ENCODE measurements at regions of chrX and their contacts with region 1.

Region 1: GRCh38 chrX:83469551-83469950 is 38.5 kb upstream of the POU3F4 start:
- DNase-seq: peak; percentile 19
- H3K4me3 Mint-ChIP-seq: no peak overlapping the region
- H3K27ac Mint-ChIP-seq: no peak overlapping the region
- H3K4me1 Mint-ChIP-seq: no peaks in the 10 kb centered on the region
- H3K27me3 Mint-ChIP-seq: no peaks in the 10 kb centered on the region

Region 2: GRCh38 chrX:83630662-83631061 is 161.1 kb after region 1 on chrX:
- CTCF ChIA-PET with region 1: interaction called, 15 read pairs
- DNase-seq: no peak
- H3K4me3 Mint-ChIP-seq: no peak overlapping the region
- H3K27ac Mint-ChIP-seq: no peak overlapping the region
- H3K4me1 Mint-ChIP-seq: peaks cover 3% of the 10 kb centered on the region
- H3K27me3 Mint-ChIP-seq: no peaks in the 10 kb centered on the region

Measured in activated naive CD4-positive, alpha-beta T cell treated with anti-CD3 and anti-CD28 coated beads, Interleukin-2, amount 10 ng/mL, durations not matched to agents 7 days and 5 days (primary cell).